Panc1 (cell line): ENCODE measurements at regions of chr10 and their contacts with region 1.

Region 1: GRCh38 chr10:53122281-53122680 is 349.7 kb upstream of the MBL2 start:
- DNase-seq: no peak
- ATAC-seq: no peak
- H3K4me3 ChIP-seq: no peak overlapping the region
- H3K27ac ChIP-seq: no peak overlapping the region
- H3K4me1 ChIP-seq: no peaks in the 10 kb centered on the region
- H3K27me3 ChIP-seq: no peaks in the 10 kb centered on the region
- CTCF ChIP-seq: no peak

Region 2: GRCh38 chr10:52858707-52859106 is 263.6 kb before region 1 on chr10:
- CTCF ChIA-PET with region 1: interaction called, 12 read pairs
- POLR2A ChIA-PET with region 1: no interaction called
- in situ Hi-C with region 1: no loop called
- intact Hi-C with region 1: no loop called
- DNase-seq: no peak
- ATAC-seq: no peak
- H3K4me3 ChIP-seq: no peak overlapping the region
- H3K27ac ChIP-seq: no peak overlapping the region
- H3K4me1 ChIP-seq: no peaks in the 10 kb centered on the region
- H3K27me3 ChIP-seq: no peaks in the 10 kb centered on the region
- CTCF ChIP-seq: no peak

Region 3: GRCh38 chr10:53045315-53045714 is 77.0 kb before region 1 on chr10:
- CTCF ChIA-PET with region 1: no interaction called
- POLR2A ChIA-PET with region 1: no interaction called
- in situ Hi-C with region 1: no loop called
- intact Hi-C with region 1: no loop called
- DNase-seq: no peak
- ATAC-seq: no peak
- H3K4me3 ChIP-seq: no peak overlapping the region
- H3K27ac ChIP-seq: no peak overlapping the region
- H3K4me1 ChIP-seq: no peaks in the 10 kb centered on the region
- H3K27me3 ChIP-seq: no peaks in the 10 kb centered on the region
- CTCF ChIP-seq: no peak